ENCODE measurements at regions of chr9 and their contacts with region 1.

Region 1: DNA sequence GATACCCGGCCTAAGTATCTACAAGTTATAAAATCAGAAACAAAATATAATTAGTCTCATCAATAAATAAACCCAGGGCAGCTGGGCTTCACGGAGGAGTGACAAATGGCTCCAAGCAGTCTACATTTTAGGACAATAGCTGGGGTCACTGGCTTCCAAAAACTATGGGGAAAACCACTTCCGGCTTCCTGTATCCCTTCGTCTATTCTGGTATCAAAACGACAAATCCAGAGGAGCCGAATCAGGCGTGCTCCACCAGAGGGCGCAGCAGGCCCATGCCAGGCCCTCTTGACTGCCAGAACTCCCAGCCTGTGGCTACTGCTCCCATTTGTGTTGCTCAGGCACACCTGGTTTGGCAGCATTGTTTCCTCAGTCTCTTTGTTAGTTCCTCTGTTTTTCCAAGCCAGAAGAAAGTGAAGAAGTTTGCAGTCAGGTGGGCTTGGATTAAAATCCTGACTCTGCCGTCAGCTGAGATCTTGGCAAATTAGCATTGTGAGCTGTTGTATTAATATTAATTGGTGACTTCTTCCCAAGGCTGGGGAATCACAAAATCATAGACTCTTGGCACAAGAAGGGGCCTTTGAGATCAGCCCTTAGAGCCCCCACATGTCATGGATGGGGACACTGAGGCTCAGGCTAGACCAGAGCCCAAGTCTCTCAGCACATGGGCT is 11.6 kb upstream of the RAB14 start:
- DNase-seq: peak; percentile 71
- CTCF ChIP-seq: peak; percentile 82

Region 2: DNA sequence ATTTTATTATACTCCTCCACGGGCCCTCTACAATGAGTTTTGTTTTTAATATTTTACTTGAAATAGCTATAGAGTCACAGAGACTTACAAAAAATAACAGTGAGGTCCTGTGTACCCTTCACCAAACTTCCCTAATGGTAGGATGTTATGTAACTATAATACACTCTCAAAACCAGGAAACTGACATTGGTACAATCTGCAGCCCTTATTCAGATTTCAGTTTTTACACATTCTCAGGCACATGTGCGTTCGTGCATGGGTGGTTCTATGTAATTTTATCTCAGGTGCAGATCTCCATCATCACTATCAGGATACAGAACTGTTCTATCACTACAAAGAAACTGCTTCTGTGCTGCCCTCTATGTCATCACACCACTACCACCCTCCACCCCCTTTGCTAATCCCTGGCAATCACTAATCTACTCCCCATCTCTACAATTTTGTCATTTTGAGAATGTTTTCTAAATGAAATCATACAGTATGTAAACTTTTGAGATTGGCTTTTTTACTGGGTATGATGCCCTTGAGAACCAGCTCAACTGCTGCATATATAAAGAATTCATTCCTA is 28.0 kb before region 1 on chr9:
- CTCF ChIA-PET with region 1: interaction called, 17 read pairs
- POLR2A ChIA-PET with region 1: no interaction called
- DNase-seq: no peak
- CTCF ChIP-seq: no peak

Region 3: GRCh38 chr9:121201738-121202533 is 11.3 kb before region 1 on chr9 and contains the start of gene RAB14:
- CTCF ChIA-PET with region 1: interaction called, 66 read pairs
- POLR2A ChIA-PET with region 1: no interaction called
- DNase-seq: peak; percentile 99
- CTCF ChIP-seq: peak; percentile 60

Region 4: GRCh38 chr9:121232247-121232646 is 19.0 kb after region 1 on chr9:
- CTCF ChIA-PET with region 1: interaction called, 38 read pairs
- POLR2A ChIA-PET with region 1: no interaction called
- DNase-seq: no peak
- CTCF ChIP-seq: no peak

Region 5: GRCh38 chr9:121278535-121279261 is 65.4 kb after region 1 on chr9:
- CTCF ChIA-PET with region 1: interaction called, 18 read pairs
- POLR2A ChIA-PET with region 1: no interaction called
- DNase-seq: peak; percentile 55
- CTCF ChIP-seq: peak; percentile 46

Region 6: GRCh38 chr9:122297512-122297911 is 1084.2 kb after region 1 on chr9:
- CTCF ChIA-PET with region 1: no interaction called
- POLR2A ChIA-PET with region 1: no interaction called
- DNase-seq: no peak
- CTCF ChIP-seq: no peak

Measured in GM10248 (cell line).